ENCODE measurements at regions of chr10 and their contacts with region 1.

Region 1: GRCh38 chr10:31977440-31978155 is 49.0 kb upstream of the ARHGAP12 start:
- DNase-seq: peak; percentile 72
- H3K4me3 ChIP-seq: no peak overlapping the region
- H3K27ac ChIP-seq: peak overlapping the region; percentile 40
- H3K4me1 ChIP-seq: peaks cover 8% of the 10 kb centered on the region
- H3K27me3 ChIP-seq: no peaks in the 10 kb centered on the region
- CTCF ChIP-seq: no peak

Region 2: DNA sequence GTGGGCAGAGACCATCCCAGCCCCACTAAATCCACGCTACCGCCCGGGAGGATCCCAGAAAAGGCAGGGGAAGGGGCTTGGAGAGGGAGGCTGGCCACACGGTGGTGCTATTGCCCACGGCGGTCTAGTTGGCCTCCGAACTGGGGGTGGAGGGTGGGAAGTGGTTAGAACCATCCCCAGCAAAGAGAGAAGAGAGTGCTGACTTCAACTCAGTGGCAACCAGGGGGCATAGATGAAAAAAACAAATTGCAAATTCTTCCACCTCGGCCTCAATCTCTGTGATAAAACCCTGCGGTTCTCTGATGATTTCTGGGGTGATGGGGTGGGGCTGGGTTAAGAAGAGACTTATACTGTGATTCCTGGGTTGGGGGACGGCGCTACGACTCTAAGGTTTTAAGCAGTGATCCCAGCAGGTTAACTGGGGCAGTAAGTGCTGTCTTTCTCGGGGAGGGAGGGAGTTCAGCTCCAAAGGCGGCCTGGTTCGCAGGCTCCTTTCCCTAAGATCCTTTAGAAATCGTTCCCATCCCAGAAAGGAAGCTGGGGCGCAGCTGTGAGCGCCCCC is 1193.6 kb before region 1 on chr10:
- CTCF ChIA-PET with region 1: interaction called, 10 read pairs
- POLR2A ChIA-PET with region 1: no interaction called
- intact Hi-C with region 1: no loop called
- DNase-seq: peak; percentile 88
- H3K4me3 ChIP-seq: peak overlapping the region; percentile 56
- H3K27ac ChIP-seq: no peak overlapping the region
- H3K4me1 ChIP-seq: no peaks in the 10 kb centered on the region
- H3K27me3 ChIP-seq: no peaks in the 10 kb centered on the region
- CTCF ChIP-seq: peak; percentile 94

Region 3: DNA sequence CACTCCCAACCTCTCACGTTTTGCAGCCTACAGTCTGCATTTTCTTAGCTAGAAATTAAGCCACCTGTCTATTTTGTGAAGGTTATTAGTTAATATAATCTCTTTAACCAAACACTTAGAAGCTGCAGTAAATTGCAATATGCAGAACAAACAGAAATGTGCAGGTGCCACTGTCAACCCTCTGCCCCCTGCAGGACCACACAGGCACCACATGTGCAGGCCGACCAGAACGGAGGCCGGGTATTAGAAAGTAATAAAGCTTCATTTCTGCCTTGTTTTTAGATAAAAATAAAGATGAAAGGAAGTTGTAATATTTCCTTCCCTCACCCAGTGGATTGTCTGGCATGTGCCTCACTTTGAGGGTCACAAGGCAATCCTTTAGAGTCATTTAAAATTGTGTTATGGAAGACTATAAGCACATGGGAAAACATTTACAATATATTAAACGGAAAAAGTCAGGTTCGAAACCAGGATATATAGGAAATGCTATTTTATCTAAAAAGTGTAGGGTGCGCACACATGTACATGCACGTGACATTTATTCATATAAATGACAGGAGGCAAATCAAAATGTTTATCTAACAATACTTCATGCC is 207.2 kb before region 1 on chr10:
- CTCF ChIA-PET with region 1: no interaction called
- POLR2A ChIA-PET with region 1: no interaction called
- intact Hi-C with region 1: no loop called
- DNase-seq: peak; percentile 46
- H3K4me3 ChIP-seq: no peak overlapping the region
- H3K27ac ChIP-seq: no peak overlapping the region
- H3K4me1 ChIP-seq: no peaks in the 10 kb centered on the region
- H3K27me3 ChIP-seq: no peaks in the 10 kb centered on the region
- CTCF ChIP-seq: peak; percentile 82

Region 4: GRCh38 chr10:31830887-31831286 is 146.7 kb before region 1 on chr10:
- CTCF ChIA-PET with region 1: no interaction called
- POLR2A ChIA-PET with region 1: no interaction called
- intact Hi-C with region 1: no loop called
- DNase-seq: peak; percentile 36
- H3K4me3 ChIP-seq: no peak overlapping the region
- H3K27ac ChIP-seq: no peak overlapping the region
- H3K4me1 ChIP-seq: peaks cover 41% of the 10 kb centered on the region
- H3K27me3 ChIP-seq: no peaks in the 10 kb centered on the region
- CTCF ChIP-seq: no peak

Region 5: DNA sequence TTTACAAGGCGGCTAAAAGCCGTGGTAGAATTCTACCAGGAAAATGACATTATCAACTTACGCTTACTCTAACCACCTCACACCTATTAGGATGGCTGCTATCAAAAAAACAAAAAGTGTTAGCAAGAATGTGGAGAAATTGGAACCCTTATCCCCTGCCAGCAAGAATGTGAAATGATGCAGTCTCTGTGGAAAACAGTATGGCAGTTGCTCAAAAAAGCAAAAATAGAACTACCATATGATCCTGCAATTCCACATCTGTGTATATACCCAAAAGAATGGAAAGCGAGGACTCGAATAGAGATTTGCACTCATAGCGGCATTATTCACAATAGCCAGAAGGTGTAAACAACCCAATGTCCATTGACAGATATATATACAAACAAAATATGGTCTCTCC is 17.3 kb after region 1 on chr10:
- CTCF ChIA-PET with region 1: no interaction called
- POLR2A ChIA-PET with region 1: no interaction called
- intact Hi-C with region 1: loop called (anchors 2 kb)
- DNase-seq: no peak
- H3K4me3 ChIP-seq: no peak overlapping the region
- H3K27ac ChIP-seq: no peak overlapping the region
- H3K4me1 ChIP-seq: no peaks in the 10 kb centered on the region
- H3K27me3 ChIP-seq: no peaks in the 10 kb centered on the region
- CTCF ChIP-seq: no peak

Measured in A673 (cell line).